ENCODE measurements at regions of chr17 and their contacts with region 1.

Region 1: GRCh38 chr17:71267668-71268067 is 853.2 kb upstream of the SOX9 start:
- DNase-seq: no peak
- ATAC-seq: no peak
- H3K4me3 ChIP-seq: no peak overlapping the region
- H3K4me3 Mint-ChIP-seq: no peak overlapping the region
- H3K27ac ChIP-seq: no peak overlapping the region
- H3K27ac Mint-ChIP-seq: no peak overlapping the region
- H3K4me1 ChIP-seq: no peaks in the 10 kb centered on the region
- H3K4me1 Mint-ChIP-seq: no peaks in the 10 kb centered on the region
- H3K27me3 ChIP-seq: no peaks in the 10 kb centered on the region
- H3K27me3 Mint-ChIP-seq: no peaks in the 10 kb centered on the region
- CTCF ChIP-seq: no peak

Region 2: DNA sequence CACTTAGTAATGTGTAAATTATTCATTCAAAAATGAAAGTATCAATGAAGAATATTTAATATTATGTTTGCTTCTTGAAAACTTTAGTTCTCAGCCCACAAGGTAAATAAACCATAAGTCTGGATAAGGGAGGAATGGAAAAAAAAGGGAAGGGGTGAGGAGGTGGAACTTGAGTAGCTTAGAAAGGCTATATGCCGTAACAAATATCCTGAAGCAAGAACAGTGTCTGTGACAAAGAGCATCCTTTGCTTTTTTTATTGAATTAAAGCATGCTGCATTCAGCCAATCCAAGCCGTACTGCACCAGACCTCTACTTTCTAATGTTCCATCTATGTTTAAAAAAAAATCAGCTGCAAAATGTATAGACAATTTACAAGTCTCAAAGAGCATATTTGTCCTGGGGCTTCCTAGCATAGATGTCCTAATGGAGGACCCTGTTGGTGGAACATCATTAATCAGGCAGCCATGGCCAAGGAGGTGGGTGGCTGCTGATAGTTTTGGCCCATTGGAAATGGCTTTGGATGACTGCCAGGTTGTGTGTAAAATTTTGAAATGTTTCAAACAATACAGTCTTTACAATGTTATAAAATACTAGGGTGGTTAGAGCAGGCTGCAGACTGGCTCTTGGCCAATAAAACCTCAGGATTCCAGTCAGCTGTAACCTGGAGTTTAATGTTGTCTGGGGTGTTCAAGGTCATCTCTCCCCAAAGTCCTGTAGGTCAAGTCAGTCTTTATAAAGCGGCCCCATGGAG is 42.7 kb before region 1 on chr17:
- CTCF ChIA-PET with region 1: no interaction called
- POLR2A ChIA-PET with region 1: no interaction called
- intact Hi-C with region 1: loop called in 1 of 2 experiments (anchors 5 kb)
- DNase-seq: no peak
- ATAC-seq: no peak
- H3K4me3 ChIP-seq: no peak overlapping the region
- H3K4me3 Mint-ChIP-seq: no peak overlapping the region
- H3K27ac ChIP-seq: no peak overlapping the region
- H3K27ac Mint-ChIP-seq: no peak overlapping the region
- H3K4me1 ChIP-seq: no peaks in the 10 kb centered on the region
- H3K4me1 Mint-ChIP-seq: no peaks in the 10 kb centered on the region
- H3K27me3 ChIP-seq: no peaks in the 10 kb centered on the region
- H3K27me3 Mint-ChIP-seq: no peaks in the 10 kb centered on the region
- CTCF ChIP-seq: no peak

Measured in CD4-positive, alpha-beta T cell (primary cell).